ENCODE measurements at regions of chr14 and their contacts with region 1.

Region 1: DNA sequence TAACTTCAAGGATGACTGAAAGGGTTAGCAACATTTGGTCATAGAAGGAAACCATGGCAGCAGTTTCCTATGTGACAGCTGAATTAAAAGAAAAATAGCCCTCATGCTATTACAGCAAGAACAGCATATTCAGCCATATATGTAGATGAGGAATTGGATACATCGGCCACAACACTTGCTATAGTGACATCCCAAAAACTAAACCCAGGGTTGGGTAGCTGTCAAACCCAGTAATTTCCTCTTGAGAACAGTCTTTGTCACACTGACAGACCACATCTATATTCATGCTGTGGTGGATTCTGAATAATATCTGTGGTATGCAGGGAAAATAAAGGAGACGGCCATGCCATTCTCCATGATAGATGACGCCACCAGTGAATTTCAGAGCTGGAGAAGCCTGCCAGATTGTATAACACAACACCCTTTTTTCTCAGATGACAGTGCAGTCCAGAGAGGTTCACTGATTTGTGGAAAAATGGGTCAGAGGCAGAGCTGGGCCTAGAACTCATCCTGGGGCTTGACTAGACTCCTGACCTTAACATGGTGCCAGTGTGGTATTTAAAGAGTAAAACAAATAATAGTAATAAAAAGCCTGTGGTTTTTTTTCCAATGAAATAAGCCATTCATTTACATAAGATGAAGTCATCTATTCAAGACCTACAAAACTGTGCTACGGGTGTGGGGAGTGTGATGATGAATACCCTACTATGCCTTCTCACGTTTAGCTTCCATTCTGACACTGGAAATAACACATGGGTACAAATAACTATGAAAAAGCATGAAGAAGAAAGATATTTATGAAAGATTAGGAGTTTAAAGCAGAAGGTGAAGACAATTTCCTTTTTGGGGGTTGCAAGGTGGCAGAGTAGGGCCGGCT is 32.3 kb downstream of the EFCAB11 start:
- DNase-seq: no peak
- H3K4me3 ChIP-seq: no peak overlapping the region
- CTCF ChIP-seq: no peak

Region 2: DNA sequence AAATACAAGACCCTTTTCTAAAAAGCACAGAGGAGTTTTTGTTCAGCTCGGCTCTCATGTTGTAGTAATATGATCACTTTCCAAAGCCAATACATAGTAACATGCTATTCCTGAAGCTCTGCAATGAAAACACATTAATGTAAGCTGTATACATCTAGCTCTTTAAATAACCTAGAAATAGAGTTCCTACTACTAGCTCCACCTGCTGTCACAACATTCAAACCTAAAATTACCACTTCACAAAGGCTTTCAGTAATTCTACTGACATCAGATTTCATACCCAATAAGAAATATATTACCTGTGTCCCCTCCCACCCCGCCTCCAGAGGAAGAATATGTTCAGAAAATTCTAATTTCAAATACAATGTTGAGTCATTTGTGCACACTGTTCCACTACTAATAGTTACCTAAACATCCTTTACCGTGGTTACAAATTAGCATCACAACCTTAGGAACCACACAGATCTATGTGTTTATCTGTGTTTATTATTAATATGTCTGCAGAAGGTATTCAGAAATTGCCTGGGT is 14.5 kb after region 1 on chr14:
- CTCF ChIA-PET with region 1: interaction called, 18 read pairs
- POLR2A ChIA-PET with region 1: interaction called, 4 read pairs
- DNase-seq: no peak
- H3K4me3 ChIP-seq: no peak overlapping the region
- CTCF ChIP-seq: no peak

Region 3: GRCh38 chr14:90019824-90020523 is 97.7 kb after region 1 on chr14:
- CTCF ChIA-PET with region 1: no interaction called
- POLR2A ChIA-PET with region 1: no interaction called
- DNase-seq: no peak
- H3K4me3 ChIP-seq: no peak overlapping the region
- CTCF ChIP-seq: no peak